H1 (cell line): ENCODE measurements at regions of chr3 and their contacts with region 1.

Region 1: GRCh38 chr3:9373465-9373864 is 10.6 kb downstream of the THUMPD3 start:
- DNase-seq: no peak
- H3K4me3 ChIP-seq: no peak overlapping the region
- H3K27ac ChIP-seq: no peak overlapping the region
- H3K4me1 ChIP-seq: no peaks in the 10 kb centered on the region
- H3K27me3 ChIP-seq: no peaks in the 10 kb centered on the region
- CTCF ChIP-seq: no peak
- EP300 ChIP-seq: no peak
- POLR2A ChIP-seq: no peak
- RAD21 ChIP-seq: no peak

Region 2: DNA sequence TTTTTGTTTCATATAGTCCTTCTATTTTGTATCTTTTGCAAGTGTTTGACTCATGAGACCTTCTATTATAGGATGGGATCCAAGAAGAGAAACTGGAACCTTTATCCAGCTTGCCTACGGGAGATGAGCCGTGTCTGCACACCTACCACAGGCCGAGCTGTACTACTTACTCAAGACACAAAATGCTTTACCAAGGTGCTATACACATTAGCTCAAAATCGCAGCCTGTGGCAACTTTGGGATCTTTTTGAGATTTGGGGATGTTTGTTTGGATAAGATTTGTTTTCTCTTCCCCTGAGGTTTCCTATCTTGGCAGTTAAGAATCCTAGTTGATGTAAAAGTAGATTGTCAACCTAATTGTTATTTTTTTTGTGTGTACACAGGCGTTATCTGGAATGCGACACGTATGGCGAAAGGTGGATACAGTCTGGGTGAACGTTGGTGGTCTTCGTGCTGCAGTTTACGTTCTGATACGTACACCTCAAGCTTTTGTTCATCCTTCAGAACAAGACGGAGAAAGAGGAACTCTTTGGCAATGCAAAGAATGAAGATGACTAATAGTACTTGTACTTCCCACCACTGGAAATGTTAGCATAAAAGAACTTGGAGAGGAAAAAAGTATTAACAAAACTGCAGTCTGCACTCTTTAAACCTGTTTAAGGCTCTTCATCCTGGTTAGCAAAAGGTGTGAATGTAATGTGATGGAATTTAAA is 10.8 kb after region 1 on chr3:
- CTCF ChIA-PET with region 1: interaction called, 4 read pairs
- POLR2A ChIA-PET with region 1: interaction called, 35 read pairs
- DNase-seq: no peak
- H3K4me3 ChIP-seq: no peak overlapping the region
- H3K27ac ChIP-seq: no peak overlapping the region
- H3K4me1 ChIP-seq: no peaks in the 10 kb centered on the region
- H3K27me3 ChIP-seq: no peaks in the 10 kb centered on the region
- CTCF ChIP-seq: no peak
- EP300 ChIP-seq: no peak
- POLR2A ChIP-seq: peak in 1 of 2 experiments; percentile 24; a peak in 1 of 3 replicates
- RAD21 ChIP-seq: no peak